ENCODE measurements at regions of chr3 and their contacts with region 1.

Region 1: GRCh38 chr3:98039322-98040024 is 4.4 kb upstream of the GABRR3 start:
- DNase-seq: peak; percentile 90
- ATAC-seq: peak; percentile 96
- H3K4me3 Mint-ChIP-seq: peak overlapping the region; percentile 73
- H3K27ac Mint-ChIP-seq: peak overlapping the region; percentile 90
- H3K4me1 Mint-ChIP-seq: peaks cover 9% of the 10 kb centered on the region
- H3K27me3 Mint-ChIP-seq: peaks cover 17% of the 10 kb centered on the region
- CTCF ChIP-seq: peak; percentile 98

Region 2: GRCh38 chr3:97827741-97828471 is 211.6 kb before region 1 on chr3:
- CTCF ChIA-PET with region 1: no interaction called
- POLR2A ChIA-PET with region 1: no interaction called
- intact Hi-C with region 1: no loop called
- DNase-seq: no peak
- ATAC-seq: no peak
- H3K4me3 Mint-ChIP-seq: no peak overlapping the region
- H3K27ac Mint-ChIP-seq: no peak overlapping the region
- H3K4me1 Mint-ChIP-seq: peaks cover 4% of the 10 kb centered on the region
- H3K27me3 Mint-ChIP-seq: peaks cover 4% of the 10 kb centered on the region
- CTCF ChIP-seq: no peak

Region 3: GRCh38 chr3:97954228-97954857 is 85.1 kb before region 1 on chr3:
- CTCF ChIA-PET with region 1: no interaction called
- POLR2A ChIA-PET with region 1: no interaction called
- intact Hi-C with region 1: no loop called
- DNase-seq: no peak
- ATAC-seq: no peak
- H3K4me3 Mint-ChIP-seq: no peak overlapping the region
- H3K27ac Mint-ChIP-seq: no peak overlapping the region
- H3K4me1 Mint-ChIP-seq: no peaks in the 10 kb centered on the region
- H3K27me3 Mint-ChIP-seq: no peaks in the 10 kb centered on the region
- CTCF ChIP-seq: no peak

Region 4: GRCh38 chr3:98056035-98056434 is 16.6 kb after region 1 on chr3:
- CTCF ChIA-PET with region 1: interaction called, 11 read pairs
- POLR2A ChIA-PET with region 1: no interaction called
- intact Hi-C with region 1: no loop called
- DNase-seq: no peak
- ATAC-seq: no peak
- H3K4me3 Mint-ChIP-seq: no peak overlapping the region
- H3K27ac Mint-ChIP-seq: no peak overlapping the region
- H3K4me1 Mint-ChIP-seq: no peaks in the 10 kb centered on the region
- H3K27me3 Mint-ChIP-seq: peaks cover 9% of the 10 kb centered on the region
- CTCF ChIP-seq: no peak

Region 5: GRCh38 chr3:98329392-98330124 is 290.1 kb after region 1 on chr3:
- CTCF ChIA-PET with region 1: interaction called, 42 read pairs
- POLR2A ChIA-PET with region 1: no interaction called
- intact Hi-C with region 1: loop called (anchors 1 kb)
- DNase-seq: peak; percentile 69
- ATAC-seq: peak; percentile 89
- H3K4me3 Mint-ChIP-seq: no peak overlapping the region
- H3K27ac Mint-ChIP-seq: no peak overlapping the region
- H3K4me1 Mint-ChIP-seq: no peaks in the 10 kb centered on the region
- H3K27me3 Mint-ChIP-seq: peaks cover 19% of the 10 kb centered on the region
- CTCF ChIP-seq: peak; percentile 75

Region 6: DNA sequence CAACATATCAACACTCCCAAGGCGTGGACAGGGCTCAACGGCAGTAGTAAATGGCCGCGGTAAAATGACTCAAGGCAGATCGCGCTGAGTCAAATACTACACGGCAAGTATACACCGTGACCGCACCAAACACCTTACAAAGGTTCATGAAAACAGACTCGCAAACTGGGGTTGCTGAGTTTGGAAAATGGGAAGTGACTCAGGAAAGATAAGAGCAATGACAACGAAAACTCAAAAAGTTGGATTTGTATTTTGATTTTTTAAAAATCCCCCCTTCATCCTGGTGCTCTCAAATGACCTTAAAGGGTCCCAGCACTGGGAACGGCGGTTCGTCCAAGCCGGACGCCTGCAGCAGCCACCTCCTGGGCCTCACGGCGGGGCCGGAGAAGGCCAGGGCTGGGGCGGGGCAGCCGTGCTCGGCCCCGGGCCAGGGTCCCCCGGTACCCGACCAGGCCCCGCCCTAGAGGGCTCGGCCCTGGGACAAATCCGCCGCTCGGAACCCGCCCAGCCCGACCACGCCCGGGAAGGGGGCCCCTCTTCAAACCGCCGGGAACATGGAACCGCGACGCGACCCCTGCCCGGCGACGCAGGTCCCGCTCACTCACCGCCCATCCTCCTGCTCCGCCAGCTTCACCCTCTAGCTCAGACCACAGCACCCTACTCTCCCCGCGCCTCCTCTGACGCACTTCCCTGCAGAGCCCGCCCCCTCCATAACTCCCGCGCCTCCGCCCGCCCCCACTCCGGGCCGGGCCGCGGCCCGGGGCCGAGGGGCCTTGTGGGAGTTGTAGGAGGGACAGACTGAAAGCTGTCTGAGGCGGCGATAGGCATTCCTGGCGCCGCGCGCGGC is 483.0 kb after region 1 on chr3 and contains the start of gene CLDND1:
- CTCF ChIA-PET with region 1: no interaction called
- POLR2A ChIA-PET with region 1: no interaction called
- intact Hi-C with region 1: loop called (anchors 2 kb)
- DNase-seq: peak; percentile 97
- ATAC-seq: peak; percentile 96
- H3K4me3 Mint-ChIP-seq: peak within 1 kb of the TSS; percentile 89
- H3K27ac Mint-ChIP-seq: peak within 1 kb of the TSS; percentile 95
- H3K4me1 Mint-ChIP-seq: peaks cover 62% of the 10 kb centered on the region
- H3K27me3 Mint-ChIP-seq: no peaks in the 10 kb centered on the region
- CTCF ChIP-seq: no peak
- total RNA-seq, gene CLDND1: 190 to 198 TPM

Region 7: DNA sequence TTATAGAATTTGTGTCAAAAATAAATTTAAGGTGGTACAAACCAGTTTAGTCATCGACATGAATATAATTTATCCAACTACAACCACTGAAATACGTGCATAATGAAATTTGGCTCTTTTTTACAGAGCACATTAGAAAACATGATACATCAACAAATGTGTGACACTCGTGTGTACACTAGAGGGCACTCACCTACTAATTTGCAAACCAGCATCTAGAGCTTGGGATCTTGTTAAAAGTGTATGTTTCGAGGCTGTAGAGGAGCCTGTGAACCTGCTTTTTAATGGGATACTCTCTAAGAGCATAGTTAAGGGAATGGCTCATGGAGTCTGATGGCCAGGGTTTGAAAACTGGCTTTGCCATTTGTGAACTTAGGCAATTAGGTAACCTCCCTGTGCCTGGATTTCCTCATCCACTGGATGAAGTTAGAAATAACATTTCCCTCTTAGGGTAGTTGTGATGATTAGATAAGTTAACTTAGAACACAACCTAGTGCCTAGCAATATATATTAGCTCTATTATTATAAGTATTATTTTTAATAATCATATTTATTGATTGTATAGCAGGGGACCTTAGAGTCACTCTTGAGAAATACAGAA is 562.7 kb after region 1 on chr3:
- CTCF ChIA-PET with region 1: interaction called, 4 read pairs
- POLR2A ChIA-PET with region 1: no interaction called
- intact Hi-C with region 1: loop called (anchors 5 kb)
- DNase-seq: peak; percentile 41
- ATAC-seq: peak; percentile 60
- H3K4me3 Mint-ChIP-seq: no peak overlapping the region
- H3K27ac Mint-ChIP-seq: no peak overlapping the region
- H3K4me1 Mint-ChIP-seq: peaks cover 3% of the 10 kb centered on the region
- H3K27me3 Mint-ChIP-seq: peaks cover 3% of the 10 kb centered on the region
- CTCF ChIP-seq: peak; percentile 76

Region 8: DNA sequence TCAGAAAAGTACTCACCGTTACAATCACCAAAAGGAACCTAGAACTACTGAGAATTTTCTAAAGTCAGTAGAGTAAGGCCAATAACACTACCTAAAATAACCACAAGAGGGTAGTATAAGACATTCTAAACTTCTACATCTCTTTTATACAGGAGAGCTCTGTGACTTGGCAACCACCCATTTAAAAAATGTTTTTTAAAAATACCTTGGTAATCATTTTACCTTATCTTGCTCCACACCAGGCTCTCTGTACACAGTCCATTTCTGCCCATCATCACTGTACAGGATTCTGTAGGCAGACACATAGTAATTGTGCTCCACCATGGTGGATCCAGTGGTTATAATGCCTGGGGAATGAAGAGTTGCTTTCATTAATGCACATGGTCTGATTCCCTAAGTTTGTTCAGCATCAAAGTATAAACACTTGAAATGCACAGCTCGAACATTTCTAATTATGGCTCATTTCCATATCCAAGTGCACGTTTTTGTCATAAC is 778.1 kb after region 1 on chr3:
- CTCF ChIA-PET with region 1: interaction called, 10 read pairs
- POLR2A ChIA-PET with region 1: no interaction called
- intact Hi-C with region 1: loop called (anchors 2 kb)
- DNase-seq: no peak
- ATAC-seq: peak; percentile 81
- H3K4me3 Mint-ChIP-seq: no peak overlapping the region
- H3K27ac Mint-ChIP-seq: no peak overlapping the region
- H3K4me1 Mint-ChIP-seq: no peaks in the 10 kb centered on the region
- H3K27me3 Mint-ChIP-seq: no peaks in the 10 kb centered on the region
- CTCF ChIP-seq: peak; percentile 76